Posterior vena cava (tissue), 2 donors: ENCODE measurements at regions of chr5 and their contacts with region 1.

Region 1: DNA sequence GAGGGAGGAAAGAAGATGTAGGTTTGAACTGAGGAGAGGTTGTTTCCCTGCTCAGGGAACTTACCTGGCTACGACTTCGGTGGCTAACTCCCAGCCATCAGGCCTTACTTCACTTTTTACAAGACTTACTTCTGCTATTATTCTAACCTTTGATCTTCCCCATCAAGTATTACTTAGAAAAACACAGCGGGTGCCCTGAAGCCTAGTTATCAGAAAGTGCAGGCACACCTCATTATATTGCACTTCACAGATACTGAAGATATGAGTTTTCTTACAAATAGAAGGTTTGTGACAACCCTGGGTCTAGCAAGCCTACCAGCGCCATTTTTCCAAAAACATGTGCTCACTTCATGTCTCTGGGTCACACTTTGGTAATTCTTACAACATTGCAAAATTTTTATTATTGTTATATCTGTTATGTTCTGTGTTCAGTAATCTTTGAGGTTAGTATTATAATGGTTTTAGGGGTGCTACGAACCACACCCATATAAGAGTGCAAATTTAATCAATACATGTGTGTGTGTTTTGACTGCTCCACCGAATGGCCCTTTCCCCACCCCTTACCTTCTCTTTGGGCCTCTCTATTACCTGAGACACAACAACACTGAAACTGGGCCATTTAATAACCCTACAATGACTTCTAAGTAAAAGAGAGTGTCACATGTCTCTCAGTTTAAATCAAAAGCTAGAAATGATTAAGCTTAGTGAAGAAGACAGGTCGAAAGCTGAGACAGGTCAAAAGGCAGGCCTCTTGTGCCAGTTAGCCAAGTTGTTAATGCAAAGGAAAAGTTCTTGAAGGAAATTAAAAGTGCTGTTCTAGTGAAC is 2102.7 kb upstream of the WWC1 start:
- DNase-seq: no peak

Region 2: DNA sequence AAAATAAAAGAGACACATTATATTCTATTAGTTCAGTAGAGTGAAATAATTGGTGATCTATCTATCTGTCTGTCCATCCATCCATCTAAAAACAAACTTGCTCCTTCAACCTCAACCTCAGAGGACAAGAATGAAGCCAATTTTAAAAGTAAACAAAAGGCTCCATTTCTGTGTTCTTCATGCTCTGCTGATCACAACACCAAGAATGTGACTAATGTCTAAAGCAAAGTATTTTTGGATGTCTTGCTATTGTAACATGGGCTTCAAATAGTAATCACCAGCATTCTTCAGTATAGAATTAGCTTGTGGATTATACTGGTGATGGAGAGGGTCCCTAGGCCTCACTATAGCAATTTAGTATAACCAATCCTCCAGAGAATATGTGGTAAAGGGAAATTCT is 1378.9 kb before region 1 on chr5:
- intact Hi-C with region 1: loop called in 1 of 2 experiments (anchors 10 kb)
- DNase-seq: no peak